GM12878 (cell line): ENCODE measurements at regions of chr1 and their contacts with region 1.

Region 1: DNA sequence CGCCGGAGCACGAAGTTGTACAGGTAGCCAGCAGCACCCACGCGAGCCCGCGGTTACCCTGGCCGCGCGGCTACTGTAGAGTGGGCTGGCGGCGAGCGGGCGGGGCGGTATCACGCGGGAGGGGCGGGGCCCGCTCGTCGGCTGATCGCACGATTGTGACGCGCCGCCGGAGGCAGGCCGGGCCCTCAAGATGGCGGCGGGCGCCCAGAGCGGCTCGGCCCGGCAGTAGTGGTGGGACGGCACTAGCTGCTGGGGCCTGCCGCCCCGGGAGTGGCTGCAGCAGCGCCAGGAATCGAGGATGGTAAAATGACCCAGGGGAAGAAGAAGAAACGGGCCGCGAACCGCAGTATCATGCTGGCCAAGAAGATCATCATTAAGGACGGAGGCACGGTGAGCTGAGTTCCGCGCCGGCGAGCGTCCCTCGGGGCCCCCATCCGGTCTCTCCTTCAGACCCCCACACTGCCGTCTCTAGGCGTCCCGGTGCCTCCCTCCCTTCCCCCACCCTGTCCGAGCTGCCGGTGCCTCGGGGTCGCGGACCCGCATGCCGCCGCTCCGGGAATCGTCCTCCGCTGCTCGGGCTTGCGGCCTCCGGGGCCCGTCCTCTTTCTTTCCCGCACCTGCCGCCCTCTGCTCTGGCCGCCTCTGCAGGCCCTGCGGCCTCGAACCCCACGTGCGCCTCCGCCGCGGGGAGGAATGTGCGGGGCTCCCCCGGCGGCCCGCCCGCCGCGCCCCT is 68.3 kb downstream of the SLC35A3 start:
- DNase-seq: peak; percentile 53
- ATAC-seq: peak; percentile 86
- H3K4me3 ChIP-seq: peak overlapping the region; percentile 92
- H3K27ac ChIP-seq: peak overlapping the region; percentile 97
- H3K4me1 ChIP-seq: peaks cover 19% of the 10 kb centered on the region
- H3K27me3 ChIP-seq: no peaks in the 10 kb centered on the region
- CTCF ChIP-seq: no peak
- EP300 ChIP-seq: no peak
- POLR2A ChIP-seq: peak; percentile 99
- RAD21 ChIP-seq: no peak

Region 2: GRCh38 chr1:99808391-99809115 is 229.5 kb before region 1 on chr1:
- CTCF ChIA-PET with region 1: interaction called, 5 read pairs
- POLR2A ChIA-PET with region 1: no interaction called
- RAD21 ChIA-PET with region 1: interaction called, 4 read pairs
- SMC1A ChIA-PET with region 1: interaction called, 6 read pairs
- in situ Hi-C with region 1: loop called (anchors 5 kb)
- intact Hi-C with region 1: loop called (anchors 1 kb)
- DNase-seq: peak; percentile 79
- ATAC-seq: peak; percentile 96
- H3K4me3 ChIP-seq: no peak overlapping the region
- H3K27ac ChIP-seq: peak overlapping the region; percentile 67
- H3K4me1 ChIP-seq: peaks cover 10% of the 10 kb centered on the region
- H3K27me3 ChIP-seq: no peaks in the 10 kb centered on the region
- CTCF ChIP-seq: peak; percentile 24 to 72 (median 55); a peak in 5 of 6 replicates
- EP300 ChIP-seq: no peak
- POLR2A ChIP-seq: no peak
- RAD21 ChIP-seq: peak; percentile 85

Region 3: GRCh38 chr1:100051401-100051800 is 13.3 kb after region 1 on chr1:
- CTCF ChIA-PET with region 1: interaction called, 5 read pairs
- POLR2A ChIA-PET with region 1: interaction called, 41 read pairs
- RAD21 ChIA-PET with region 1: interaction called, 7 read pairs
- SMC1A ChIA-PET with region 1: interaction called, 13 read pairs
- in situ Hi-C with region 1: no loop called
- intact Hi-C with region 1: no loop called
- DNase-seq: no peak
- ATAC-seq: no peak
- H3K4me3 ChIP-seq: no peak overlapping the region
- H3K27ac ChIP-seq: no peak overlapping the region
- H3K4me1 ChIP-seq: peaks cover 13% of the 10 kb centered on the region
- H3K27me3 ChIP-seq: no peaks in the 10 kb centered on the region
- CTCF ChIP-seq: no peak
- EP300 ChIP-seq: no peak
- POLR2A ChIP-seq: no peak
- RAD21 ChIP-seq: no peak

Region 4: GRCh38 chr1:100132566-100133477 is 94.7 kb after region 1 on chr1 and contains the starts of genes SASS6 and TRMT13:
- CTCF ChIA-PET with region 1: interaction called, 3 read pairs
- POLR2A ChIA-PET with region 1: interaction called, 8 read pairs
- RAD21 ChIA-PET with region 1: interaction called, 7 read pairs
- SMC1A ChIA-PET with region 1: interaction called, 3 read pairs
- in situ Hi-C with region 1: no loop called
- intact Hi-C with region 1: loop called (anchors 2 kb)
- DNase-seq: peak; percentile 90
- ATAC-seq: peak; percentile 91
- H3K4me3 ChIP-seq: peak within 1 kb of the TSS; percentile 99
- H3K27ac ChIP-seq: peak within 1 kb of the TSS; percentile 83
- H3K4me1 ChIP-seq: peaks cover 11% of the 10 kb centered on the region
- H3K27me3 ChIP-seq: no peaks in the 10 kb centered on the region
- CTCF ChIP-seq: no peak
- EP300 ChIP-seq: peak in 1 of 2 experiments; percentile 43; a peak in 1 of 4 replicates
- POLR2A ChIP-seq: peak; percentile 80
- RAD21 ChIP-seq: no peak
- polyA plus RNA-seq, gene SASS6: 8.2 to 10.7 TPM
- polyA plus RNA-seq, gene TRMT13: 17.1 to 22.3 TPM

Region 5: DNA sequence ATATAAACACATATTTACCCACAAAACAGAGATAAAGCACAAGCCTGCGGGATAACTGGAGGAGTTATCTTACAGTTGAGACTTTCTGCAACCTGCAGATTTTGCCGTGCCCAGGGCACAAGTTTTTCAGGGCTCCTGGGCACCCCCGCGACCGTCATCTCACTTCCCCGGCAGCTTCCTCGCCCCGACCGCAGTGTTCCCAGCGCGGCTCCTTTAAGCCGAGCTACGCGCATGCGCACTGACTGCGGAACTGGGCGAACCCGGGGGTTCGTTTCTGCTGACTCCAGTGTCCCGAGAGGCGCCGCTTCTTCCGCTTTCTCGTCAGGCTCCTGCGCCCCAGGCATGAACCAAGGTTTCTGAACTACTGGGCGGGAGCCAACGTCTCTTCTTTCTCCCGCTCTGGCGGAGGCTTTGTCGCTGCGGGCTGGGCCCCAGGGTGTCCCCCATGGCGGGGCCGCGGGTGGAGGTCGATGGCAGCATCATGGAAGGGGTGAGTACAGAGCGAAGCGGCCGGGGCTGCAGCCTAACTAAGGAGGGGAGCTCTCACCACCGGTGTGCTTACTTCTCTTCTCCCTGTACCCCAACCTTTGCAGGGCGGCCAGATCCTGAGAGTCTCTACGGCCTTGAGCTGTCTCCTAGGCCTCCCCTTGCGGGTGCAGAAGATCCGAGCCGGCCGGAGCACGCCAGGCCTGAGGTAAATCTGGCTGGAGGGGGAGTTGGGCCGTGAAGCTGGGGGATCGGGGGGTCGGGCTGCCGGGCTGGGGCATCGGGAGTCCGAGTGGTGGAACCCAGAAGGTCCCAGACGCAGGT is 228.0 kb after region 1 on chr1 and contains the start of gene RTCA:
- CTCF ChIA-PET with region 1: no interaction called
- POLR2A ChIA-PET with region 1: no interaction called
- RAD21 ChIA-PET with region 1: interaction called, 4 read pairs
- SMC1A ChIA-PET with region 1: interaction called, 4 read pairs
- in situ Hi-C with region 1: no loop called
- intact Hi-C with region 1: loop called (anchors 5 kb)
- DNase-seq: peak; percentile 74
- ATAC-seq: peak; percentile 96
- H3K4me3 ChIP-seq: peak within 1 kb of the TSS; percentile 100
- H3K27ac ChIP-seq: peak within 1 kb of the TSS; percentile 73
- H3K4me1 ChIP-seq: peaks cover 2% of the 10 kb centered on the region; the same call in 1 of the 2 replicates
- H3K27me3 ChIP-seq: no peaks in the 10 kb centered on the region
- CTCF ChIP-seq: no peak
- EP300 ChIP-seq: no peak
- POLR2A ChIP-seq: peak; percentile 83; the same call in 1 of the 2 replicates
- RAD21 ChIP-seq: no peak
- polyA plus RNA-seq, gene RTCA: 10.3 to 23.6 TPM

Region 6: DNA sequence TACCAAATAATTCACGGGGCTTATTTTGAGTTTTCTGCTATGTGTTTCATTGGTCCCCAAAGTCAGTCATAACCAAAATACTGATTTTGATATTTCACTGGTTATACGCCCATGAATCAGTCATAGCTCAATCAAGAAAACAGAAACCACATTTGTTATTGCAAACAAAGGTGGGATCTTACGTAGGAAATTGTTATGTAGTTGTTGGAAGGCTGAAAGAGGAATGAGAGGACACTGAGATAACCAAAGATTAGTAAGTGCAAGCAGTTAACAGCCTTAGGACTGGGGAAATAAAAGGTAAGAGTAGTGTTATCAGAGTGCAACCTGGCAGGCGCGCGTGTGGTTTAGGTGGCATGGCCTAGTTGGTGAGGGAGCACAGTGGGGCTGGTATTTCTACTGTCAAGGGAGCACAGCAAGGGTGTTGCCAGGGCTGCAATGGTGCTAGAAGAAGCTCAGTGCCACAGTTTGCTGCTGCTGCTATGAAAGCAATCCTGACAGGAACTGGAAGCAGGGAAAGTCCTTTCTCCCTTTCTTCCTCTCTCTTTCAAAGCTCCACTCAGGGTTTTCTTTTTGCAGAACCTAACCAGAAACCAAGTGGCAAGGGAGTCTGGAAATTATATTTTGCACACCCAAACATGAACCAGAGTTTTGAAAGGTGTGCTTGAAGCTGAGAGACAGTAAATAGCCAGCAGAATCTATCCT is 261.6 kb after region 1 on chr1:
- CTCF ChIA-PET with region 1: no interaction called
- POLR2A ChIA-PET with region 1: no interaction called
- RAD21 ChIA-PET with region 1: no interaction called
- SMC1A ChIA-PET with region 1: no interaction called
- in situ Hi-C with region 1: no loop called
- intact Hi-C with region 1: no loop called
- DNase-seq: no peak
- ATAC-seq: no peak; the same call in 2 of the 3 replicates
- H3K4me3 ChIP-seq: no peak overlapping the region
- H3K27ac ChIP-seq: no peak overlapping the region
- H3K4me1 ChIP-seq: no peaks in the 10 kb centered on the region
- H3K27me3 ChIP-seq: no peaks in the 10 kb centered on the region
- CTCF ChIP-seq: no peak
- EP300 ChIP-seq: no peak
- POLR2A ChIP-seq: peak; percentile 33; the same call in 1 of the 2 replicates
- RAD21 ChIP-seq: no peak

Region 7: GRCh38 chr1:100530880-100531487 is 492.9 kb after region 1 on chr1:
- CTCF ChIA-PET with region 1: no interaction called
- POLR2A ChIA-PET with region 1: no interaction called
- RAD21 ChIA-PET with region 1: no interaction called
- SMC1A ChIA-PET with region 1: no interaction called
- in situ Hi-C with region 1: no loop called
- intact Hi-C with region 1: loop called (anchors 10 kb)
- DNase-seq: peak; percentile 40
- ATAC-seq: peak; percentile 94
- H3K4me3 ChIP-seq: no peak overlapping the region
- H3K27ac ChIP-seq: no peak overlapping the region
- H3K4me1 ChIP-seq: peaks cover 22% of the 10 kb centered on the region; the same call in 1 of the 2 replicates
- H3K27me3 ChIP-seq: no peaks in the 10 kb centered on the region
- CTCF ChIP-seq: no peak
- EP300 ChIP-seq: no peak
- POLR2A ChIP-seq: no peak
- RAD21 ChIP-seq: no peak

Region 8: DNA sequence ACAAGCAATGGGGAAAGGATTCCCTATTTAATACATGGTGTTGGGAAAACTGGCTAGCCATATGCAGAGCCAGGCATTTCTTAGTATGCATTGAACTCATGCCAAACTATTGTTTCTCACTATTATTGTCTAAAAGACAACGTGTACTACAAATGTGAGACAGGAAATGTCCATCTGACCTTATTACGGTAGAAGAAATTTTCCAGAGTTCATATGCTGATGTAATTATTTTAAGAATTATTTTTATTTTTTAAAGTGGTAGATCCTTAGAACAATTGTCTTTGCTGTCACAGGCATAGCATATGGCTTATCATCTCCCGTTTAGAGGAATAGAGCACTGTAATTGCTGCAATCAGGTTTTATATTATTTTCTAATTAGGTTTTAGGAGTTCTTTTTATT is 1123.5 kb after region 1 on chr1:
- CTCF ChIA-PET with region 1: no interaction called
- POLR2A ChIA-PET with region 1: no interaction called
- RAD21 ChIA-PET with region 1: no interaction called
- SMC1A ChIA-PET with region 1: no interaction called
- in situ Hi-C with region 1: no loop called
- intact Hi-C with region 1: no loop called
- DNase-seq: no peak
- ATAC-seq: no peak
- H3K4me3 ChIP-seq: no peak overlapping the region
- H3K27ac ChIP-seq: no peak overlapping the region
- H3K4me1 ChIP-seq: no peaks in the 10 kb centered on the region
- H3K27me3 ChIP-seq: no peaks in the 10 kb centered on the region
- CTCF ChIP-seq: no peak
- EP300 ChIP-seq: no peak
- POLR2A ChIP-seq: no peak
- RAD21 ChIP-seq: no peak